Esophagus muscularis mucosa (tissue), 4 donors: ENCODE measurements at regions of chr9 and their contacts with region 1.

Region 1: DNA sequence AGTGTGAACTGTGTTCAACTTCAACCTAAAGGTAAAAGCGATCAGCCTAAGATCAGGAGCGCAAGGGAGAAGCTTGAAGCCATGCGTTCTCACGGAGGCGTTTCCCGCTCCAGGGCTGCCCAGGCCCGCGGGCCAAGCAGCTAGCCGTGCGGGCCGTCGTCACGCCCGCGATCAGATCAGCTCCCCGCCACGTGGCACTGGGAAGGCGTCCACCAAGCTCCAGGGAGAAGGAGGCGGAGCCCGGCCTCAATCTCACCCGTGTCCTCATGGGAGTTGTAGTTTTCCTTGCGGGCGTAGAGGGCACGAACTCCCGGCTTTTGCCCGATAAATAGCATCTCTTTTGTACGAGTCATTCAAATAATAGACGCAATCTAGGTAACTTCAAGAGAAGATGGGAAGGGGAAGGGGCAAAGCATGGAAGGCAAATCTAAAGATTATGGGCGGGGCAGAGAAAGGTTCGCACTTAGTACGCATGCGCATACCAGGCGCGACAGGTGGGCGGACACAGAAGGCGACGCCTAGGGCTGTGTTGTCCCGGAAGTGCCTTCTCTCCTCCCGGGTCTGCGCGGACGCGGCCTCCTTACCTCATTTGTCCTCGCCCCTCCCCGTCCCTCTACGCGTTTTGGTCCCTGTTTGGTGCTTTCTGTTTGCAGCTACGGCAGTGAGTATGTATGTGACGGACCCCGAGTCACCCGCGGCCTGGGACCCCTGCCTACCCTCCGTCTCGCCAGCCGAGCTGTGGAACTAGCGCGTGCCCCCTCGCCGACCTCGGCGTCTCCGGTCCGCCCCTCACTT is 40.8 kb upstream of the ZCCHC7 start:
- DNase-seq: peak; percentile 98
- H3K4me3 ChIP-seq: peak overlapping the region; percentile 64 to 97 (median 89)
- H3K27ac ChIP-seq: peak overlapping the region; percentile 84 to 93 (median 90)
- H3K4me1 ChIP-seq: peaks cover 12 to 33% (median 24%) of the 10 kb centered on the region in 4 donors
- H3K27me3 ChIP-seq: no peaks in the 10 kb centered on the region
- CTCF ChIP-seq: no peak
- EP300 ChIP-seq: no peak
- POLR2A ChIP-seq: no peak

Region 2: GRCh38 chr9:37119907-37120842 is 40.6 kb after region 1 on chr9 and contains the start of gene ZCCHC7:
- intact Hi-C with region 1: loop called (anchors 2 kb)
- DNase-seq: peak; percentile 99
- H3K4me3 ChIP-seq: peak within 1 kb of the TSS; percentile 59 to 94 (median 90)
- H3K27ac ChIP-seq: peak within 1 kb of the TSS; percentile 86 to 96 (median 92)
- H3K4me1 ChIP-seq: peaks cover 9 to 30% (median 20%) of the 10 kb centered on the region in 4 donors
- H3K27me3 ChIP-seq: no peaks in the 10 kb centered on the region
- CTCF ChIP-seq: no peak
- EP300 ChIP-seq: no peak
- POLR2A ChIP-seq: peak; percentile 53
- total RNA-seq, gene ZCCHC7: 12.1 to 19.1 (median 15.6) TPM